PC-9 (cell line): ENCODE measurements at regions of chr6 and their contacts with region 1.

Region 1: DNA sequence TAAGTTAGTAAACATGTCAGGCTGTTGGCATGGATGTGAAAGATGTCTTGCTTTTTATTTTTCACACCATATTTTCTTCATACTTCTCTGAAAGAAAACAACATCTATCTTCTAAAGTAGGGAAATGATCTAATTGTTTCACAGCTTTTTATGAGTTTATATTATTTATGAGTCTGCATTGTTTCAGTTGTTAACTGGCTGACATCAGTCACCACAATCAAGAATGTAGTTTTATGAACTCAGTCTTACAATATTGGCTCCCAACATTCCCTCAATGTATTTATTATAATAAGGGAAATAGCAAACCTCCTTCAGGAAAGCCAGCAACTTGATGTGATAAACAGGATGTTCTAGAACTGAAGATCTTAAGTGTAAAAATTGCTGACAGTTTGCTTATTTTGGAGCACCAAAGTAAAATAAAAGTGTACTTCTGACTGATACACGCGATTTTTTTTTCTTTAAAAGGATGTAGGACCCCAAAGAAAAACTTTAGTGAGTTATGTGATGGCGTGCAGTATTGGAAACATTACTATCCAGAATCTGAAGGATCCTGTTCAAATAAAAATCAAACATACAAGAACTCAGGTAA is 106.0 kb downstream of the ADGRG6 start:
- DNase-seq: no peak
- H3K4me3 ChIP-seq: no peak overlapping the region
- H3K27ac ChIP-seq: no peak overlapping the region
- H3K4me1 ChIP-seq: peaks cover 12% of the 10 kb centered on the region
- H3K27me3 ChIP-seq: no peaks in the 10 kb centered on the region
- CTCF ChIP-seq: no peak

Region 2: GRCh38 chr6:142444376-142444775 is 36.6 kb after region 1 on chr6:
- CTCF ChIA-PET with region 1: interaction called, 12 read pairs
- POLR2A ChIA-PET with region 1: no interaction called
- intact Hi-C with region 1: no loop called
- DNase-seq: no peak
- H3K4me3 ChIP-seq: no peak overlapping the region
- H3K27ac ChIP-seq: no peak overlapping the region
- H3K4me1 ChIP-seq: no peaks in the 10 kb centered on the region
- H3K27me3 ChIP-seq: no peaks in the 10 kb centered on the region
- CTCF ChIP-seq: no peak

Region 3: GRCh38 chr6:142462267-142462666 is 54.5 kb after region 1 on chr6:
- CTCF ChIA-PET with region 1: no interaction called
- POLR2A ChIA-PET with region 1: no interaction called
- intact Hi-C with region 1: no loop called
- DNase-seq: no peak
- H3K4me3 ChIP-seq: no peak overlapping the region
- H3K27ac ChIP-seq: no peak overlapping the region
- H3K4me1 ChIP-seq: no peaks in the 10 kb centered on the region
- H3K27me3 ChIP-seq: no peaks in the 10 kb centered on the region
- CTCF ChIP-seq: peak; percentile 28; the same call in 1 of the 2 replicates

Region 4: DNA sequence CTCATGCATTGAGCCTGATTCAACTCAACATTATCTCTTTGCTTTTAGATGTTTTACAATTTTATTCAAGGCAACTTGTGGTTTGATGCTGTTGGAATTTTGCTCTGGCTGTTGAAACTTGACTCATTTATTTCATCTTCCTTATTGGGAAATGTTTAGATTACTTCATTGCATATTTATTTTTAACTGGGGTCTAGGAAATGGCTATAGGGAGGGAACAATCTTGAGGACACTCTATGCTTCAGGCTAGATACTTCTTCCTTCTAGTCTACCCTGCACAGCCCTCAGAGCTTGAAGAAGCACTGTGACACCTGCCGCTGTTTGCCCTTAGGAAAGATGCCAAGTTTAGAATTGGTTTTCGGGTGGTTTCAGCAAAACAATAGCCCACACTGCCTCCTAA is 77.5 kb after region 1 on chr6:
- CTCF ChIA-PET with region 1: no interaction called
- POLR2A ChIA-PET with region 1: no interaction called
- intact Hi-C with region 1: no loop called
- DNase-seq: peak in 1 of 2 experiments; percentile 37
- H3K4me3 ChIP-seq: no peak overlapping the region
- H3K27ac ChIP-seq: no peak overlapping the region
- H3K4me1 ChIP-seq: no peaks in the 10 kb centered on the region
- H3K27me3 ChIP-seq: no peaks in the 10 kb centered on the region
- CTCF ChIP-seq: no peak

Region 5: GRCh38 chr6:142802124-142802523 is 394.3 kb after region 1 on chr6:
- CTCF ChIA-PET with region 1: no interaction called
- POLR2A ChIA-PET with region 1: no interaction called
- intact Hi-C with region 1: no loop called
- DNase-seq: peak; percentile 41 to 76
- H3K4me3 ChIP-seq: no peak overlapping the region
- H3K27ac ChIP-seq: peak overlapping the region; percentile 56
- H3K4me1 ChIP-seq: peaks cover 14% of the 10 kb centered on the region
- H3K27me3 ChIP-seq: no peaks in the 10 kb centered on the region
- CTCF ChIP-seq: no peak